ENCODE measurements at regions of chr15 and their contacts with region 1.

Region 1: GRCh38 chr15:74307827-74308644 is 59.4 kb downstream of the CYP11A1 start:
- DNase-seq: peak; percentile 70
- CTCF ChIP-seq: peak; percentile 82

Region 2: DNA sequence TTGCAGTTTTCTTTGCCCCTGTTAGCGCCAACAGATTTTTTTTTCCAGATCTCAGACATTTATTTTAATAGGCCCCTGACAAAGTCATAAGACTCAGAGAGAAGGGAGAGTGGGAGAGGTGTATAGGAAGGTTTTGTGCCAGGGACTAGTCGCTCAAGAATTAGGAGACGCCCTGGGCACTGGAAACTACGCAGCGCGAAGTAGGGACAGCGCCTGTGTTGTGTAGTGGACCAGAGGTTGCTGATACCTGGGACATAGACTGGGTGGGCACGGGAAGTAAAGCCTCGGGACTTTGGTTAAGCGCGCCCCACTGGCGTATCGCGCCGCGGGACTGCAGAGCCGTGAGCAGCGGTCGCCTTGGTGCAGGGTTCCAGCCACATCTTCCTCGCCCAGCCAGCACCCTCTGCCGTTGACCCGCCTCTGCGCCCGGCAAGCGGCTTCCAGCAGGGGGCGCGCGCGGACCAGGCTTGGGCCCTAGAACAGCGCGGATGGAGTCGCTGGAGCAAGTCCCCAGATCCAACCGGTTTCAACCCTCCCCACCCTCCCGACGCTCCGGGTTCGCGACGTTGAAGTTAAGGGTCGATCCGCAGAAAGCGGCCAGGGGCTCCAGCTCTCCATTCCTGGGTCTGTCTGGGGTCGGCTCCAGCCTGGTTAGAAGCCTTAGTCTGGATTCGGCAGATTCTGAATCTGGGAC is 180.6 kb before region 1 on chr15:
- CTCF ChIA-PET with region 1: interaction called, 43 read pairs
- POLR2A ChIA-PET with region 1: no interaction called
- DNase-seq: peak; percentile 83
- CTCF ChIP-seq: peak; percentile 100

Region 3: GRCh38 chr15:74291101-74292071 is 16.6 kb before region 1 on chr15:
- CTCF ChIA-PET with region 1: interaction called, 16 read pairs
- POLR2A ChIA-PET with region 1: no interaction called
- DNase-seq: peak; percentile 87
- CTCF ChIP-seq: no peak

Region 4: GRCh38 chr15:74680456-74680855 is 372.4 kb after region 1 on chr15:
- CTCF ChIA-PET with region 1: no interaction called
- POLR2A ChIA-PET with region 1: no interaction called
- DNase-seq: no peak
- CTCF ChIP-seq: no peak